Naive thymus-derived CD4-positive, alpha-beta T cell (primary cell): ENCODE measurements at regions of chr18 and their contacts with region 1.

Region 1: DNA sequence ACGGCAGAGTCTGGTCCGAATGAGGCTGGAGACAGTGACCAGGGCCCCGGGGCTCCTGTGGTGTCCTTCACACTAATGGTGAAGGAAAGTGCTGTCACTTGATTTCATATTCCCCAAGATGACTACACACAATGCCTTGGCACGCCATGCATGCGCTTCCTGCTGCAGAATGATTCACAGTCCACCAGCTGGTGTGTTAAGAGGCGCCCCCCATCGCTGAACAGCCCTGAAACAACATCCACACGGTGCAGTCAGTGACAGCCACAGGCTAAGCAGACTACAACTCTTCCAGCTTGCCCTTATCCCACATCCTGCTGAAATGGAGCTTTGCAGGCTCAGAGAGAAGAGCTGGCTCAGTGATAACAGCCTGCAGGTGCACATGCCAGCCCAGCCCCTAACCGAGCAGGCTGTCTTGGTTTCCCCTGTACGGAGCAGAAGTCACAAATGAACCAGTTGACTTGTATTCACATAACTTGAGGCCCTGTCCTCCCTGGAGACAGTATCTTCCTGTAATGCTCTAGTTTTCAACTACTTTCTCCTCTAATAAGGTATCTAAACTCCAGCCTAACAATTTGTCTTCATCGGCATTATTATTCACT is 24.3 kb upstream of the CDH20 start:
- DNase-seq: no peak
- ATAC-seq: peak; percentile 8
- H3K4me3 ChIP-seq: no peak overlapping the region
- H3K4me3 Mint-ChIP-seq: no peak overlapping the region
- H3K27ac ChIP-seq: no peak overlapping the region
- H3K27ac Mint-ChIP-seq: no peak overlapping the region
- H3K4me1 ChIP-seq: no peaks in the 10 kb centered on the region
- H3K4me1 Mint-ChIP-seq: peaks cover 0 to under 1% (median 0%) of the 10 kb centered on the region in 7 donors
- H3K27me3 ChIP-seq: no peaks in the 10 kb centered on the region
- H3K27me3 Mint-ChIP-seq: no peaks in the 10 kb centered on the region

Region 2: GRCh38 chr18:61216051-61216450 is 92.8 kb before region 1 on chr18:
- CTCF ChIA-PET with region 1: no interaction called
- POLR2A ChIA-PET with region 1: no interaction called
- intact Hi-C with region 1: no loop called
- DNase-seq: no peak
- ATAC-seq: no peak
- H3K4me3 ChIP-seq: no peak overlapping the region
- H3K4me3 Mint-ChIP-seq: no peak overlapping the region
- H3K27ac ChIP-seq: no peak overlapping the region
- H3K27ac Mint-ChIP-seq: no peak overlapping the region
- H3K4me1 ChIP-seq: no peaks in the 10 kb centered on the region
- H3K4me1 Mint-ChIP-seq: no peaks in the 10 kb centered on the region
- H3K27me3 ChIP-seq: no peaks in the 10 kb centered on the region
- H3K27me3 Mint-ChIP-seq: no peaks in the 10 kb centered on the region

Region 3: DNA sequence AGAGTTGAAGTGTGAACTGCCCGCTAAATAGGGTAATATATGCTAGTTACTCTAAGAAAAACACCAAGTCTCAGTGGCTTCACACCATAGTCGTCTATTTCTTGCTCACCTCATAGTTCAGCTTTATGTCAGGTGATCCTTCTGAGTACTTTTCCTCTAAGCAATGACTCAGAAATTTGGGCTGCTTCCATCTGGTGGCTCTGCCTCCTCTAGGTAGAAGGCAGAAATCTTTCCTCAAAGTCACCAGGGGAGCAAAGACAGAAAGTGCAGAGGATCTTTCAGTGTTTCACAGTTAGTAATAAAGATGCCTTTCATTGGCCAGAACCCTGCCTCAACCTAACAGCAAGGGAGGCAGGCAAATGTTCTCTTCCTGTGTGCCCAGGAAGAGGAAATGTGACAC is 41.7 kb after region 1 on chr18:
- CTCF ChIA-PET with region 1: no interaction called
- POLR2A ChIA-PET with region 1: no interaction called
- intact Hi-C with region 1: loop called in 1 of 2 experiments (anchors 10 kb)
- DNase-seq: no peak
- ATAC-seq: no peak
- H3K4me3 ChIP-seq: no peak overlapping the region
- H3K4me3 Mint-ChIP-seq: no peak overlapping the region
- H3K27ac ChIP-seq: no peak overlapping the region
- H3K27ac Mint-ChIP-seq: no peak overlapping the region
- H3K4me1 ChIP-seq: no peaks in the 10 kb centered on the region
- H3K4me1 Mint-ChIP-seq: no peaks in the 10 kb centered on the region
- H3K27me3 ChIP-seq: no peaks in the 10 kb centered on the region
- H3K27me3 Mint-ChIP-seq: peaks cover 0 to 7% (median 5%) of the 10 kb centered on the region in 5 donors